AG04450 (cell line): ENCODE measurements at regions of chr12 and their contacts with region 1.

Region 1: DNA sequence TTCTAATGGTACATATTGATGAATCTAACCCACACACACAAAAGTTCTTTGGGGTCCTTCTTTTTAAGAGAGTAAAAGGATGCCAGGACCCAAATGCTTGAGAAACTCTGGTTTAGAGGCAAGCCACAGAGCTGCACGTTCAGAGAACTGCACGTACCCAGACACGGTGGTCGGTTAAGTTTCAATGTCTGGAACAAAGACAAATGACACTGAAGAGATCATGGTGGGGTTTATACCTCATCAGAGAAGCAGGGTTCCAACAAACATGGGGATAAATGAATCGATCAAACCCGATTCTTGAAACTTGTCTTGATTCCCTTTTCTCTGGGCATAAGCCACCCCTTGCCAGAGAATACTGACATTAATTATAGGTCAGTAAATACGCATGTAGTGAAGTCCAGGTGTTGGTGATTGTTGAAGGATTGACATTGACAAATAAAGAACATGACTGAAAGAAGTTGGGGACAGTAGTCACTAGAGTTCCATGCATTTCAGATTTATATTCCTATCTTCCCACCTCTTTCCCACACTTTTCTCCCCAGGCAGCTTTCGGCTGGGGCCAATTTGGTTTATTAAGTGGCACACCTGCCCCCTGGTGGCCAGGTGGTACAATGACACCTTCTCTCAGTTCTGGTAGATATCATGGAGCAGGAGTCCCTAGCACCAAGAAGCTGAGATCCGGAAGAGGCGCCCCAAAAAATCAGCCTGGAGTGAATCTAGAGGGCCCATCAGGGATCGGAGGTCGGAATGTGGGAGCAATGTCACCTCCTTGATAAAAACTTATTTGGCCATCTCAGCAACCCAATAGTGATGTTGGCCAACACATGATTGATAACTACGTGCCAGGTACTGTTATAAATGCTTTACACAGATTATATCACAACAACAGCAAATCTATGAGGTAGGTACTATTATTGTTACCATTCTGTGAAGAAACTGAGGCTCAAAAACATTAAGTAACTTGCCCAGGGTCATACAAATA is 17.8 kb upstream of the HDAC7 start:
- DNase-seq: no peak
- H3K4me3 ChIP-seq: no peak overlapping the region
- H3K27ac ChIP-seq: no peak overlapping the region
- H3K27me3 ChIP-seq: no peaks in the 10 kb centered on the region
- CTCF ChIP-seq: peak; percentile 85

Region 2: DNA sequence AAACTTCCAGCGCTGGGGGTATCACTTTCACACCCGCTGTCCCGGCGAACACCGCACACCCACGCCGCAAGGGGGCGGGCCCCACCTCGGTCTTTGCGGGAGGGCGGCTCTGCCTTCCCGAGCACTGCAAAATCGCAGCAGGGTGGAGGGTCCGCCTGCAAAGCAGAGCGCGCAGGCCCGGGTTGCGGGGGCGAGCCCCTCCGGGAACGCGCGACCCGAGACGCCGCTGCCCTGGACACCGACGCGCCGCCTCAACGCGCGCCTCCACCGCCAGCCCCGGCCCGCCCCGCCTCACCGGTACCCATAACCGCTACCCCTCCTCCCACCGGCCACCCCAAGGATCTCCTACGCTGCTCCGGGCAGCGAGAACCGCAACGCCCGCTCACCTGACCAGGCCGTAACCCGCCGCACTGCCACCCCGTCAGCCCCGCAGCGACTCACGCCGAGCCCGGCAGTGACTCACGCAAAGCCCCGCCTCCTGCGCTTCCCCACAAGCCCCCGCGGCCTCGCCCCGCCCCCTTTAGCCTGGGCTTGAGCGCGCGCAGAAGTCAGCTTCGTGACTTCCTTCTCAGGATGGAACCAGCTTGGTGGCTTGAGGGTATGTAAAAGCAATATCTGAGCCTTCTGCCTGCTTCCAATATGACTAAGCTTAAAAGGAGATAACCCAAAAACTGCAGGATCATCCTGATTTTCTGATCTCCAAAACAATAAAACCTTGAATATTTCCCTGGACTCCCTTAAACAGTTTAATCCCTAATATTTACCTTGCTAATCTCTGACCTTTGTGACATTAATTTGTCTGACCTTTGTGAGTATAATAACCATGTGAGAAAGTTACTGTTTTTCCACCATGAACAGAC is 131.7 kb before region 1 on chr12 and contains the start of gene RPAP3:
- CTCF ChIA-PET with region 1: interaction called, 23 read pairs
- POLR2A ChIA-PET with region 1: no interaction called
- DNase-seq: peak; percentile 74
- H3K4me3 ChIP-seq: peak within 1 kb of the TSS; percentile 78
- H3K27ac ChIP-seq: no peak within 1 kb of the TSS
- H3K27me3 ChIP-seq: no peaks in the 10 kb centered on the region
- CTCF ChIP-seq: peak; percentile 65
- polyA plus RNA-seq, gene RPAP3: 18.5 and 28.2 TPM in 2 replicates

Region 3: GRCh38 chr12:47736877-47737676 is 100.4 kb before region 1 on chr12:
- CTCF ChIA-PET with region 1: interaction called, 76 read pairs
- POLR2A ChIA-PET with region 1: interaction called, 3 read pairs
- DNase-seq: peak; percentile 24
- H3K4me3 ChIP-seq: no peak overlapping the region
- H3K27ac ChIP-seq: peak overlapping the region; percentile 65
- H3K27me3 ChIP-seq: no peaks in the 10 kb centered on the region
- CTCF ChIP-seq: no peak

Region 4: DNA sequence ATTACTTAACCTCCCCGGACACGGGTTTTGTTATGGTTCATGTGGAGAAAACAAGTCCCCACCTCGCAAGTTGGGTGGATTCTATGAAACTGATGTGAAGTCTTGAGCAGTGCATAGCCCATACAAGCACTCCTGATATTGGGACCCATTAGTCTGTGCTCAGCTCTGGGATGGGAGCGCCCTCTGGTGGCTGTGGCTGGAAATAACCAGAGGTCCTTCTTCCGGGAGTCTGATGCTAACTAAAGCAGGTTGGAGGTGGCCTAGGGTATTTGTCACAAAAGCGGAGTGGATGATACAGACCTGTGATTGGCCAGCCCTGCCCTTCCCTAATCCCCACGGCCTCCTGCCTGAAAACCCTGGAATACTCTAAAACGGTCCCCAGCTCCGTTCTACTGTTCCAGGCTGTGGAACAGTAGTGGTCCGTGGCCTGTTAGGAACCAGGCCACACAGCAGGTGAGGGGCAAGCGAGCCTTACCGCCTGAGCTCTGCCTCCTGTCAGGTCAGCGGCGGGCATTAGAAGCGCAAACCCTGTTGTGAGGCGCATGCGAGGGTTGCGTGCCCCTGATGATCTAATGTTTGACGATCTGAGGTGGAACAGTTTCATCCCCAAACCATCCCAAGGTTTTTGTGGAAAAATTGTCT is 58.1 kb before region 1 on chr12:
- CTCF ChIA-PET with region 1: interaction called, 104 read pairs
- POLR2A ChIA-PET with region 1: interaction called, 3 read pairs
- DNase-seq: peak; percentile 64
- H3K4me3 ChIP-seq: no peak overlapping the region
- H3K27ac ChIP-seq: no peak overlapping the region
- H3K27me3 ChIP-seq: no peaks in the 10 kb centered on the region
- CTCF ChIP-seq: peak; percentile 95

Region 5: GRCh38 chr12:47797441-47797840 is 40.0 kb before region 1 on chr12:
- CTCF ChIA-PET with region 1: interaction called, 69 read pairs
- POLR2A ChIA-PET with region 1: no interaction called
- DNase-seq: no peak
- H3K4me3 ChIP-seq: no peak overlapping the region
- H3K27ac ChIP-seq: no peak overlapping the region
- H3K27me3 ChIP-seq: no peaks in the 10 kb centered on the region
- CTCF ChIP-seq: peak; percentile 38; the same call in 1 of the 2 replicates

Region 6: DNA sequence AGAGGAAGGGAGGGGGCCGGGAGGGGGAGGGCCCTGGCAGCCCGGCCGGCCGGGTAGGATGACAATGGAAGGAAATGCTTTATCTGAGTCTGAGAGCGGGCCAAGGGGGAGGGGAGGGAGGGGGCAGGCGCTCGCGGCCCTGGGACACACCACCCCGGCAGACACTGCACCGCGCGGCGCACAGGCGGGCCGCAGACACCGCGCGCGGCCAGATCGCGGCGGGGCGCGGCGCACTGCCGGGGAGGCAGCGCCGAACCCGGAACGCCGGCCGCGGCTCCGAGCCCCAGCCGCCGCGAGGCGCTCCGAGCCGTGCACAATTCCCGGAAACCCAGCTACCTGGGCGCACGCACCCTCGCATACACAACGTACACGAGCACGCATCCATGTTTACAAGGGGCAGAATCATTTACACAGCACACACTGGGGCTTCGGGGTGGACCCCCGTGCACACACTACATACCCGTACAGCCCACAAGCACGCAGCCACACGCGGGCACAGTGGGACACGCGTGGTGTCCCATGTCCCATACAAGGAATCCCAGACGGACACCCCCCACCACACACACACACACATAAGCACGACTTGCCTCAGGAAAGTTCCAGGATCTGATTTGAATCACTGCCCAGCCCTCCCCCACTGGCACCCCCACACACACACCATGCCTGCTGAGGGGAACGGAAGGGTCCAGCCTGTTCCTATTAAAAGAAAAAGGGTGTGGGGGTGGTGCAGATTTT is 17.4 kb before region 1 on chr12 and contains the start of gene HDAC7:
- CTCF ChIA-PET with region 1: interaction called, 22 read pairs
- POLR2A ChIA-PET with region 1: interaction called, 19 read pairs
- DNase-seq: no peak
- H3K4me3 ChIP-seq: peak within 1 kb of the TSS; percentile 91
- H3K27ac ChIP-seq: peak within 1 kb of the TSS; percentile 99
- H3K27me3 ChIP-seq: no peaks in the 10 kb centered on the region
- CTCF ChIP-seq: no peak
- polyA plus RNA-seq, gene HDAC7: 17.1 and 22.1 TPM in 2 replicates

Region 7: DNA sequence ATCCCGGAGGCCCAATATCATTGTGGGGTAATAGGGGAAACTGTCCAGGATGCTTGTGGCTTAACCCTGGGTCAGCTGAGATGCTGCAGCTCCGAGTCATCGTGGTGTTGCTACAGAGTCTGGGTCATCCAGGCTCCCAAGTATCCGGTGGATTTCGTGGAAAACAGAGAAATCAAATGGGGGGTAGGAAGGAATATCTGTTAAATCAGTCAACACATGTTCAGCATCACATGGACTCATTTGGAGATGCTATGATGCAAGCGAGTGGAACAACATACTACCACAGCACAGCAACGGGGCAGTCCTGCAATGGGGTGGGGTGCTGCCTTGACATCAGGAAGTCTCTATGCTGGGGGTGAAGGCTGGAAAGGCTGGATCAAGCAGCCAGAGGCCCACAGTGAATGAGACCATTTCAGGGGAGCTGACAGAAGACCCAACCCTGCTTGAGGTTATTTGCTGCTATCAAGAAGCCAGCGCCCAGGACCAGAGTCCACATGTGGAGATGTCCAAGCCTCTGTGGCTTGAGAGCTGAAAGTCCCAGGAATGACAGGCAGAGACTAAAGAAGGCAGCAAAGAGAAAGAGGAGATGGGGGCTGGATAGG is 44.4 kb after region 1 on chr12:
- CTCF ChIA-PET with region 1: interaction called, 14 read pairs
- POLR2A ChIA-PET with region 1: interaction called, 4 read pairs
- DNase-seq: peak; percentile 96
- H3K4me3 ChIP-seq: 0 out of 2 replicates have a peak overlapping the region, but pooled peaks have one; percentile 2
- H3K27ac ChIP-seq: peak overlapping the region; percentile 96
- H3K27me3 ChIP-seq: no peaks in the 10 kb centered on the region
- CTCF ChIP-seq: no peak